CD8-positive, alpha-beta T cell (primary cell): ENCODE measurements at regions of chr11 and their contacts with region 1.

Region 1: GRCh38 chr11:18526521-18527296 is at the start of gene TSG101:
- DNase-seq: peak; percentile 84 to 96 (median 95)
- ATAC-seq: peak; percentile 78
- H3K4me3 ChIP-seq: peak within 1 kb of the TSS; percentile 83 to 90
- H3K4me3 Mint-ChIP-seq: peak within 1 kb of the TSS; percentile 100
- H3K27ac ChIP-seq: peak within 1 kb of the TSS; percentile 97 to 99
- H3K27ac Mint-ChIP-seq: peak within 1 kb of the TSS; percentile 100
- H3K4me1 ChIP-seq: peaks cover 23% of the 10 kb centered on the region
- H3K4me1 Mint-ChIP-seq: peaks cover 54% of the 10 kb centered on the region
- H3K27me3 ChIP-seq: no peaks in the 10 kb centered on the region
- H3K27me3 Mint-ChIP-seq: no peaks in the 10 kb centered on the region
- CTCF ChIP-seq: no peak
- total RNA-seq, gene TSG101: 36.2 to 36.5 TPM

Region 2: DNA sequence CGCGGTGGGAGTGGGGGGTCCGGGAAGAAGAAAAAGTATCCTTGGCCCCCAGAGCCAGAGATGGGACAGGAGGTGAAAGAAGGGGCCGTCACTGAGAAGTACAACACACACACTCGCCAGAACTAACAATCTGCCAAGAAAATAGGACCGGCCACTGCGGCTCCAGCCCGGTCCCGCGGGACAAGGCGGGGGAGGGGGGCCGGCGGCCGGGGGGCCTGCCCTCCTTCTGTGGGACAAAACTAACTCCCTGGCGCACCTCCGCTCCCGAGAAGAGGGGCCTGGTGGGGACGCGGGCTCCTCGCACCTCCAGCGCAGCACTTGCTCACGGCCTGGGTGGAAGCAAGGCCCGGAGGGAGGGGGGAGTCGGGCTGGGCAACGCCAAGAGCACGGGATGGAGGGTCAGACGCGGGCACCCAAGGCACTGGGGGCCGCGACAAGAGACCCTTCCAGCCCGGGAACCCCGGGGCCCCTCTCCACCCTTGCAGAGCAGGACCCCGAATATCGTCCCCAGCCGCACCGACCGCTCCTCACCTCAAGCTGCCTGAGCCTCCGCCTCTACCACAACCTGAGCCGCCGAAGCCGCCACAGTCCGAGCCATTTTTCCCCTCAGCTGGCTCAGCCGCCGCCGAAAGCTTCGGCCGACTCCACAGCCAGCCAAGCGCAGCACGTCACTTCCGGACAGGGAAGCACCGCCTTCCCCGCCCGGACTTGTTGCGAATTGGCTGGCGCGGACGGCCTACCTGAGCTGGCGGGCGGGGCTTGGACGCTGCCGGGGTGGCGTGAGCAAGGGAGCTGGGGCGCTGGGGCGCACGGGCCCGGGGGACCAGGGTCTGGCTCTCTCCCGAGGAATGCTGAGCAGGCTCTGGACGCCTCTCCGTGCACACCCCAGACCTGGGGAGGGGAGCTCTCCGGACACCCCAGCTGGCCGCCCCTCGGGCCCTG is 1319.1 kb before region 1 on chr11 and contains the start of gene PIK3C2A:
- CTCF ChIA-PET with region 1: no interaction called
- POLR2A ChIA-PET with region 1: no interaction called
- intact Hi-C with region 1: loop called in 1 of 2 experiments (anchors 5 kb)
- DNase-seq: peak; percentile 87 to 96 (median 94)
- ATAC-seq: peak; percentile 96
- H3K4me3 ChIP-seq: peak within 1 kb of the TSS; percentile 80 to 86
- H3K4me3 Mint-ChIP-seq: peak within 1 kb of the TSS; percentile 99
- H3K27ac ChIP-seq: peak within 1 kb of the TSS; percentile 76 to 88
- H3K27ac Mint-ChIP-seq: peak within 1 kb of the TSS; percentile 99
- H3K4me1 ChIP-seq: peaks cover 26% of the 10 kb centered on the region
- H3K4me1 Mint-ChIP-seq: peaks cover 47% of the 10 kb centered on the region
- H3K27me3 ChIP-seq: no peaks in the 10 kb centered on the region
- H3K27me3 Mint-ChIP-seq: no peaks in the 10 kb centered on the region
- CTCF ChIP-seq: no peak
- total RNA-seq, gene PIK3C2A: 50.8 to 54.3 TPM

Region 3: DNA sequence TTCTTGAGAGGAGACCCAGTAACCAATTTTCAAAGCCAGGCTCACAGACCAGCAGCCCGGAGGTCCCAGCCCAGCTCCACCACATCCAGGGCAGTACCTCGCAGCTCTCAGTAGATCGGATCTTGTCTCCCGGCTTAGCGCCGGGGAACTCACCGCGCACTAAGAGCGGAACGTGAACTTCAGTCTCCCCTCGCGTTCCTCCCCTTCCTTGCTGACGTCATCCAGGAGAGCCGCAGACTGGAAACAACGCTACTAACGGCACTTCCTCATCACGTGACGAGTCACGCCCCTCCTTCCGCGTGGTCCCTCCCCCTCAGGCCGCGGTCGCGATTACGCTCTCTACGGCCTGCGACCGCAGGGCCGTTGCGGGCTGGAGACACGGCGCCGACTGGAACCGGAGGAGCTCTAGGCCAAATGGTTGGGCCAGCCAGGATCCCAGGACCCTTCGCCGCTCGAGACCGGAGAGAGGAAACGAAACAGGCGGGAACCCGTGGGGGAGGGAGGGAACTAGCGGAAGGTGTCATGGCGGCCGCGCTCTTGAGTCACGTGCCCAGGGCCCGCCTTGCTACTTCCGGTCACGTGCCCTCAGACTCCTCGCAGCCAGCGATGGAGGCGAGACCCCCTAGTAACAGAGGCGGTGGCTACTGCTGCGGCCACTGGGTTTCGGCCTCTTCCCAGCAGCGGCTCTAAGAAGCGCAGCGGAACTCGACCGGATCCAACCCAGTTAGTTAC is 204.6 kb before region 1 on chr11 and contains the starts of genes GTF2H1 and HPS5:
- CTCF ChIA-PET with region 1: no interaction called
- POLR2A ChIA-PET with region 1: interaction called, 8 read pairs
- intact Hi-C with region 1: loop called (anchors 1 kb)
- DNase-seq: peak; percentile 91 to 100 (median 96)
- ATAC-seq: peak; percentile 87
- H3K4me3 ChIP-seq: peak within 1 kb of the TSS; percentile 89 to 94
- H3K4me3 Mint-ChIP-seq: peak within 1 kb of the TSS; percentile 100
- H3K27ac ChIP-seq: peak within 1 kb of the TSS; percentile 92 to 99
- H3K27ac Mint-ChIP-seq: peak within 1 kb of the TSS; percentile 100
- H3K4me1 ChIP-seq: peaks cover 51% of the 10 kb centered on the region
- H3K4me1 Mint-ChIP-seq: peaks cover 81% of the 10 kb centered on the region
- H3K27me3 ChIP-seq: no peaks in the 10 kb centered on the region
- H3K27me3 Mint-ChIP-seq: no peaks in the 10 kb centered on the region
- CTCF ChIP-seq: no peak
- total RNA-seq, gene GTF2H1: 11.3 to 14.3 TPM
- total RNA-seq, gene HPS5: 9.9 to 12.6 TPM

Region 4: GRCh38 chr11:18408558-18409242 is 118.0 kb before region 1 on chr11:
- CTCF ChIA-PET with region 1: no interaction called
- POLR2A ChIA-PET with region 1: no interaction called
- intact Hi-C with region 1: no loop called
- DNase-seq: no peak
- ATAC-seq: peak; percentile 19
- H3K4me3 ChIP-seq: no peak overlapping the region
- H3K4me3 Mint-ChIP-seq: no peak overlapping the region
- H3K27ac ChIP-seq: no peak overlapping the region
- H3K27ac Mint-ChIP-seq: no peak overlapping the region
- H3K4me1 ChIP-seq: no peaks in the 10 kb centered on the region
- H3K4me1 Mint-ChIP-seq: peaks cover 4% of the 10 kb centered on the region
- H3K27me3 ChIP-seq: no peaks in the 10 kb centered on the region
- H3K27me3 Mint-ChIP-seq: no peaks in the 10 kb centered on the region
- CTCF ChIP-seq: no peak

Region 5: GRCh38 chr11:18540207-18541009 is 13.7 kb after region 1 on chr11:
- CTCF ChIA-PET with region 1: interaction called, 7 read pairs
- POLR2A ChIA-PET with region 1: interaction called, 10 read pairs
- intact Hi-C with region 1: no loop called
- DNase-seq: peak in 2 of 9 experiments; percentile 52 to 64
- ATAC-seq: peak; percentile 63
- H3K4me3 ChIP-seq: no peak overlapping the region
- H3K4me3 Mint-ChIP-seq: no peak overlapping the region
- H3K27ac ChIP-seq: no peak overlapping the region
- H3K27ac Mint-ChIP-seq: no peak overlapping the region
- H3K4me1 ChIP-seq: no peaks in the 10 kb centered on the region
- H3K4me1 Mint-ChIP-seq: no peaks in the 10 kb centered on the region
- H3K27me3 ChIP-seq: no peaks in the 10 kb centered on the region
- H3K27me3 Mint-ChIP-seq: no peaks in the 10 kb centered on the region
- CTCF ChIP-seq: peak; percentile 59

Region 6: GRCh38 chr11:18575361-18575760 is 48.7 kb after region 1 on chr11:
- CTCF ChIA-PET with region 1: no interaction called
- POLR2A ChIA-PET with region 1: no interaction called
- intact Hi-C with region 1: no loop called
- DNase-seq: no peak
- ATAC-seq: no peak
- H3K4me3 ChIP-seq: no peak overlapping the region
- H3K4me3 Mint-ChIP-seq: no peak overlapping the region
- H3K27ac ChIP-seq: no peak overlapping the region
- H3K27ac Mint-ChIP-seq: no peak overlapping the region
- H3K4me1 ChIP-seq: no peaks in the 10 kb centered on the region
- H3K4me1 Mint-ChIP-seq: peaks cover 5% of the 10 kb centered on the region
- H3K27me3 ChIP-seq: no peaks in the 10 kb centered on the region
- H3K27me3 Mint-ChIP-seq: no peaks in the 10 kb centered on the region
- CTCF ChIP-seq: no peak

Region 7: GRCh38 chr11:18698341-18699268 is 171.9 kb after region 1 on chr11 and contains the start of gene TMEM86A:
- CTCF ChIA-PET with region 1: no interaction called
- POLR2A ChIA-PET with region 1: interaction called, 3 read pairs
- intact Hi-C with region 1: loop called in 1 of 2 experiments (anchors 1 kb)
- DNase-seq: peak; percentile 80 to 95 (median 90)
- ATAC-seq: peak; percentile 94
- H3K4me3 ChIP-seq: peak within 1 kb of the TSS; percentile 58 to 67
- H3K4me3 Mint-ChIP-seq: peak within 1 kb of the TSS; percentile 84
- H3K27ac ChIP-seq: peak within 1 kb of the TSS; percentile 48 to 51
- H3K27ac Mint-ChIP-seq: peak within 1 kb of the TSS; percentile 86
- H3K4me1 ChIP-seq: peaks cover 10% of the 10 kb centered on the region
- H3K4me1 Mint-ChIP-seq: peaks cover 17% of the 10 kb centered on the region
- H3K27me3 ChIP-seq: no peaks in the 10 kb centered on the region
- H3K27me3 Mint-ChIP-seq: no peaks in the 10 kb centered on the region
- CTCF ChIP-seq: no peak
- total RNA-seq, gene TMEM86A: 5.2 to 6.1 TPM

Region 8: DNA sequence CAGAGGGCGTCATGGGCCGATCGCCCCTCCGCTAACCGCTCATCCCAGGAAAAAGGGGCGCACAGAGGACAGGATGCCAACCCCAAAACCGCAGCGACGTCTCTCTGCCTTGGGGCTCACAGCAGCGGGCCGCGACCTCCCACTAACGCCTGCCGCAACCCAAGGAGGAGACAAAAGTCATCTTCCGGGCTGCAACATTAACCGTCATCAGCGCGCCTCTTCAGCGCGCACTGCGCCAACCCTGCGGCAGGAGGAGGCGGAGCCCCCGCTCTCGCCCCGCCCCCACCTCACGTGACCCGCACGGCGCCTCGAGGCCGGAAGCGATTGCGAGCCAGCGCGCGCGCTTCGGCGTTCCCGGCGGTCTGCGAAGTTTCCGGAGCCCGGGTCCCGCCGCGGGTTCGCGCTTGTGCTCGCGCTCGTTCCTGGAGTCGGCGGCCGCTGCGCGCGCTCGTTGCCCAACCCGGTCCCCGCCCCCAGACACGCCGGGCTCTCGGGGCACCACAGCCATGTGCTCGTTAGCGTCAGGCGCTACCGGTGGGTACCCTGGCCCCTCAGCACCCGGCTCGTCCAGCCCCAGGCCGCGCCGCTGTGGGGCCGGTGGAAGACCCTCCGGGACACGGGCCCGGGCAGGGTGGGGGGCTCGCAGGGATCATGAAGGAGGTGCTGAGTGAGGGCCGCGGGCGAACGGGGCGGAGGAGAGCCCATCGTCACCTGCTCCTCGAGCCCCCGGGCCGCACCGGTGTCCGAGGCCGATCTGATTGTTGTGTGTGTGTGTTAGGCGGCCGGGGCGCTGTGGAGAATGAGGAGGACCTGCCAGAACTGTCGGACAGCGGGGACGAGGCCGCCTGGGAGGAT is 1860.8 kb after region 1 on chr11 and contains the start of gene PRMT3:
- CTCF ChIA-PET with region 1: no interaction called
- POLR2A ChIA-PET with region 1: no interaction called
- intact Hi-C with region 1: loop called in 1 of 2 experiments (anchors 5 kb)
- DNase-seq: peak; percentile 96 to 99 (median 97)
- ATAC-seq: peak; percentile 86
- H3K4me3 ChIP-seq: peak within 1 kb of the TSS; percentile 85 to 86
- H3K4me3 Mint-ChIP-seq: peak within 1 kb of the TSS; percentile 96
- H3K27ac ChIP-seq: peak within 1 kb of the TSS; percentile 92 to 94
- H3K27ac Mint-ChIP-seq: peak within 1 kb of the TSS; percentile 99
- H3K4me1 ChIP-seq: peaks cover 17% of the 10 kb centered on the region
- H3K4me1 Mint-ChIP-seq: peaks cover 35% of the 10 kb centered on the region
- H3K27me3 ChIP-seq: no peaks in the 10 kb centered on the region
- H3K27me3 Mint-ChIP-seq: no peaks in the 10 kb centered on the region
- CTCF ChIP-seq: peak; percentile 86
- total RNA-seq, gene PRMT3: 10.2 to 10.6 TPM